ENCODE measurements at regions of chr11 and their contacts with region 1.

Region 1: DNA sequence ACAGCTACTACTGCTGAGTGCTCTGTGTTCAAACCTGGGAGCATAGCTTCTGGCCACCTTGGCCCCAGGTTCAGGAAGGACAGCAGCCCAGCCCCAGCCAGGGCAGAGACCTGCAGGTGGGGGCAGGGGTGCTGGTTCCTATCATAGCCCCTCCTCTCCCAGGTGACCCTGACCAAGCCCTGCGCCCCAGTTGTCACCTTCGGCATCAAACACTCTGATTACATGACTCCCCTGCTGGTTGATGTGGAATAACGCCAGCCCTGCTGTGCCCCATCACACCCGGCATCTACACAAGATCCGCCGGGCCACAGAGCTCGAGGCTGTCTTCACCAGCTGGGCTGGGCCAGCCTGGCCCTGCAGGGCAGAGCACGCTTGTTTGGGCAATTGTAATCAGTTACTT is 6.9 kb downstream of the SCGB1C1 start:
- DNase-seq: peak in 2 of 5 donors; percentile 7 to 21
- ATAC-seq: peak in 1 of 4 donors; percentile 7
- H3K4me3 ChIP-seq: no peak overlapping the region
- H3K27ac ChIP-seq: no peak overlapping the region
- H3K4me1 ChIP-seq: peaks cover 0 to 35% (median 4%) of the 10 kb centered on the region in 12 donors
- H3K27me3 ChIP-seq: no peaks in the 10 kb centered on the region
- CTCF ChIP-seq: no peak
- POLR2A ChIP-seq: no peak

Region 2: GRCh38 chr11:363948-364761 is 164.4 kb after region 1 on chr11:
- intact Hi-C with region 1: loop called in 3 of 10 experiments (anchors 5 to 10 kb)
- DNase-seq: no peak
- ATAC-seq: peak in 3 of 4 donors; percentile 23 to 46 (median 24)
- H3K4me3 ChIP-seq: no peak overlapping the region
- H3K27ac ChIP-seq: no peak overlapping the region
- H3K4me1 ChIP-seq: peaks cover 0 to 11% (median 6%) of the 10 kb centered on the region in 12 donors
- H3K27me3 ChIP-seq: peaks cover 11 to 62% (median 42%) of the 10 kb centered on the region in 9 donors
- CTCF ChIP-seq: peak in 1 of 12 donors; percentile 19
- POLR2A ChIP-seq: no peak

Region 3: DNA sequence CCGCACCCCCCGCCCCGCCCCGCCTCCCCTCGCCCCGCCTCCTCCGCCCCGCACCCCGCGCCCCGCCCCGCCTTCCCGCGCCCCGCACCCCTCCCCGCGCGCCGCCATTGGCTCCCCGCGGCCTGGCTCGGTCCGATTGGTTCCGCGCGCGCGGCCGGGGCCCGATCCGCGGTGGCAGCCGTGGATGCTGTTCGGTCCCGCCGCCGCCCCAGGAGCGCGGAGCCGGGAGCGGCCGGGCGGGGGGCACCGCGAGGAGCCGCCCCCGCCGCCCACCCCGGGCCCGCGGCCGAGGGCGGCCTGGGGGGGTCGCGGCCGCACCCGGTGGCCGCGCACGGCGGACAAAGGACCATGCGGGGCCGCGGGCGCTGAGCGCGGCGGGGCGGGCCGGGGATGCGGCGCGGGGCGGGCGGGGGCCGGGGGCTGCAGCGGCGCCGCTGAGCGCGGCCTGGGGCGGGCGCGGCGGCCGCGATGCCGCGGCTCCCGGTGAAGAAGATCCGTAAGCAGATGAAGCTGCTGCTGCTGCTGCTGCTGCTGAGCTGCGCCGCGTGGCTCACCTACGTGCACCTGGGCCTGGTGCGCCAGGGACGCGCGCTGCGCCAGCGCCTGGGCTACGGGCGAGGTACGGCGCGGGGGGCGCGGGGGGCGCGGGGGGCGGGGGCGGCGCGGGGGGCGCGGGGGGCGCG is 169.7 kb after region 1 on chr11 and contains the start of gene B4GALNT4:
- intact Hi-C with region 1: loop called in 3 of 10 experiments (anchors 5 to 10 kb)
- DNase-seq: no peak
- ATAC-seq: peak in 1 of 4 donors; percentile 19
- H3K4me3 ChIP-seq: peak within 1 kb of the TSS in 8 of 12 donors; percentile 8 to 41 (median 24)
- H3K27ac ChIP-seq: no peak within 1 kb of the TSS
- H3K4me1 ChIP-seq: peaks cover 0 to 12% (median 6%) of the 10 kb centered on the region in 12 donors
- H3K27me3 ChIP-seq: peaks cover 11 to 57% (median 43%) of the 10 kb centered on the region in 9 donors
- CTCF ChIP-seq: no peak
- POLR2A ChIP-seq: no peak
- total RNA-seq, gene B4GALNT4: 0.28 to 1.9 (median 0.67) TPM in 7 of 9 donors, not detected in the others